T-cell (primary cell): ENCODE measurements at regions of chr14 and their contacts with region 1.

Region 1: DNA sequence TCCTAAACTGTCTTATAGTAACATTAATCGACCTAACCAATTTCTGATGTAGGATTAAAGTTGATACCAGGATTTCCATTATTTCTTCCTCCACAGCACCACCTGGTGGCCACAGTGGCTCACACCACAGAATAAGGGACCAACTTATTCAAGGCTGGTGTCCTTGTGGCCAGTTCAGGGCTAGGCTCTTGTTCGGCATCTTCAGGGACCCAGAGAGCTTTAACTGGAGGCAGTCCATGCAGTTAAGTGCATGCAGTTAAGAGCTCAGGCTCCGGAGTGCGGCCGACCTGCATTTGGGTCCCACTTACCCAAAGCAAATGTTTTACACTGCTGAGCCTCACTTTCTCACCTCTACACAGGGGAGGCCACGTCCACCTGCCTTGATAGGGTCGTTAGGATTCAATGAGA is 42.0 kb upstream of the GPR68 start:
- DNase-seq: peak; percentile 36 to 87 (median 75)
- ATAC-seq: peak; percentile 56 to 78 (median 76)
- H3K4me3 ChIP-seq: no peak overlapping the region
- H3K4me3 Mint-ChIP-seq: no peak overlapping the region
- H3K27ac ChIP-seq: no peak overlapping the region
- H3K27ac Mint-ChIP-seq: peak overlapping the region; percentile 40 to 71
- H3K4me1 ChIP-seq: peaks cover 0 to 9% of the 10 kb centered on the region in 2 experiments
- H3K4me1 Mint-ChIP-seq: peaks cover 12 to 20% (median 14%) of the 10 kb centered on the region in 3 donors
- H3K27me3 ChIP-seq: no peaks in the 10 kb centered on the region
- H3K27me3 Mint-ChIP-seq: no peaks in the 10 kb centered on the region

Region 2: DNA sequence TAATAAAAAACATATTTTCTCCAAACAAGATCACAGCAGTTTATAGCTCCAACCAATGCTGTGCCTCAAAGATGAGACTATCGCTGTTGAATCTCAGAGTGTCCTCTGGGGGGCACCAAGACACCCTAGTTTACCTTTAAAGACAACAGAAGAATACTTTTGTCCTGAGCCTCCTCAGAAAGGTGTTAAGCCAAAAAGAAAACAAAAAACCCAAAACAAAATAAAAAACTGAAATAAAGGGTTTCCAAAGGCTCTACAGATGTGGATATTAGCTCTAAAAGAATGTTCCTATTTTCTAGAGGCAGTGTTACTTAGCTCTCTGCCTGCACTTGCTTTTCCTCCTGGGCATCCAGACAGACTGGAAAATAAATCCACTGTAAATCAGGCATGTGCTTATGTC is 383.4 kb before region 1 on chr14:
- CTCF ChIA-PET with region 1: interaction called in 1 of 2 experiments, 10 read pairs
- POLR2A ChIA-PET with region 1: no interaction called
- DNase-seq: peak; percentile 13 to 77 (median 47)
- ATAC-seq: peak; percentile 64 to 90 (median 81)
- H3K4me3 ChIP-seq: no peak overlapping the region
- H3K4me3 Mint-ChIP-seq: no peak overlapping the region
- H3K27ac ChIP-seq: no peak overlapping the region
- H3K27ac Mint-ChIP-seq: peak overlapping the region in 1 of 2 donors; percentile 48
- H3K4me1 ChIP-seq: no peaks in the 10 kb centered on the region
- H3K4me1 Mint-ChIP-seq: peaks cover 0 to 3% (median 2%) of the 10 kb centered on the region in 3 donors
- H3K27me3 ChIP-seq: no peaks in the 10 kb centered on the region
- H3K27me3 Mint-ChIP-seq: no peaks in the 10 kb centered on the region

Region 3: DNA sequence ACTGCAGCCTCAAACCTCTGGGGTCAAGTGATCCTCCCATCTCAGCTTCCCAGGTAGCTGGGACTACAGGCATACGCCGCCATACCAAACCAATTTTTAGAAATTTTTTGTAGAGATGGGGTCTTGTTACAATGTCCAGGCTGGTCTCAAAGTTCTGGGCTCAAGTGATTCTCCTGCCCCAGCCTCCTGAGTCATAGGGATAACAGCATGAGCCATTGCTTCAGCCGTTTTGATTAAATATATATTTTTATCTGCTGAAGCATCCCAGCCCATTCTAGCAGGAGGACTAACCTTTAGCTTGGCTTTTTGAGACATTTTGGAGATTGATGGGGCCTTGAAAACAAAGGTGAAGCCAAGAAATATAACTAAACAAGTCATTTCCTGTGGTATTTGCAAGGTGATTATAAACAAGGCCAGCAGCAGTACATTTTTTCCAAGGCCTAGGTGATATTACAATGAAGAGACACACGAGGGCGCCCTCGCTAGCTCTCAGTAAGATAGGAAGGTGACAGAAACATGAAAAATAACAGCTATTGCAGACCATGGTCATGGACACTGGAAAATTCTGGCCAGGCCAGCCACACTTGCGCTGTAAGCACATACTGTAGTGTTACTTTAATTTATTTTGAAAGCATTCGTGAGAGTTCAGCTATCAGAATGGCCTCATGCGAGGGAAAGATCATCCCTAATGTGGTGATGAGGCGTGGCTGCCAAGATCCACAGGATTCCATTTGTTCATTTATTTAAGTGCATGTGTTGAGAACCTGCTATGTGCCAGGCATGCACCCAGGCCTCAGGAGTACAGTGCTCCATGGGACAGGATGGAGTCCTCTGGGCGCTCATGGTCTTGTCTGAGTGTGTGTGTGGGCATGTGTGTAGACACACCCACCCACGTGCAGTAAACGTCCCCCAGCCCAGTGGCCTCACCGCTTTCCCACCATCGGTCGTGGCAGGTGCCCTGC is 109.2 kb before region 1 on chr14:
- CTCF ChIA-PET with region 1: interaction called, 10 to 62 read pairs
- POLR2A ChIA-PET with region 1: interaction called in 1 of 2 experiments, 3 read pairs
- DNase-seq: peak; percentile 40 to 89 (median 63)
- ATAC-seq: peak; percentile 77 to 88 (median 87)
- H3K4me3 ChIP-seq: no peak overlapping the region
- H3K4me3 Mint-ChIP-seq: no peak overlapping the region
- H3K27ac ChIP-seq: peak overlapping the region; percentile 67
- H3K27ac Mint-ChIP-seq: peak overlapping the region; percentile 92 to 94
- H3K4me1 ChIP-seq: peaks cover 0 to 11% of the 10 kb centered on the region in 2 experiments
- H3K4me1 Mint-ChIP-seq: peaks cover 12 to 17% (median 13%) of the 10 kb centered on the region in 3 donors
- H3K27me3 ChIP-seq: no peaks in the 10 kb centered on the region
- H3K27me3 Mint-ChIP-seq: no peaks in the 10 kb centered on the region

Region 4: DNA sequence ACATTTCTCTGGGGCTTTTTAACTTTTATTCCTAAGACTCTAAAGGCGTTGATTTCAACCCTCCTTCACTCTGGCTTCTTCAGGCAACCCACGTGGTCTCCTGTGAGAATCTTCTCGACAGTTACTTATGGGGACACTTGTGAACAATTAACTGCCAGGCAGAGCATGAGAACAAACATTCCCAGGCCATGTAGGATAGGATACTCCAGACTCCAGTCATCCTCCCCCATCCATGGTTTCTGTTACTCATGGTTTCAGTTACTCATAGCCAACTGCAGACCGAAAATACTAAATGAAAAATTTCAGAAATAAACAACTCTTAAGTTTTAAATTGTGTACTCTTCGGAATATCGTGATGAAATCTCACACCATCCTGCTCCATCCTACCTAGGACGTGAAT is 61.5 kb before region 1 on chr14:
- CTCF ChIA-PET with region 1: interaction called, 7 to 12 read pairs
- POLR2A ChIA-PET with region 1: no interaction called
- DNase-seq: no peak
- ATAC-seq: no peak
- H3K4me3 ChIP-seq: no peak overlapping the region
- H3K4me3 Mint-ChIP-seq: peak overlapping the region in 1 of 3 donors; percentile 75
- H3K27ac ChIP-seq: peak overlapping the region; percentile 39
- H3K27ac Mint-ChIP-seq: peak overlapping the region; percentile 86 to 95
- H3K4me1 ChIP-seq: peaks cover 30 to 82% of the 10 kb centered on the region in 2 experiments
- H3K4me1 Mint-ChIP-seq: peaks cover 90 to 94% (median 91%) of the 10 kb centered on the region in 3 donors
- H3K27me3 ChIP-seq: no peaks in the 10 kb centered on the region
- H3K27me3 Mint-ChIP-seq: no peaks in the 10 kb centered on the region

Region 5: GRCh38 chr14:91405724-91406435 is 119.3 kb after region 1 on chr14:
- CTCF ChIA-PET with region 1: interaction called in 1 of 2 experiments, 11 read pairs
- POLR2A ChIA-PET with region 1: no interaction called
- DNase-seq: no peak
- ATAC-seq: no peak
- H3K4me3 ChIP-seq: peak overlapping the region; percentile 22 to 35
- H3K4me3 Mint-ChIP-seq: peak overlapping the region; percentile 68 to 81 (median 69)
- H3K27ac ChIP-seq: peak overlapping the region; percentile 95
- H3K27ac Mint-ChIP-seq: peak overlapping the region; percentile 94
- H3K4me1 ChIP-seq: peaks cover 77 to 97% of the 10 kb centered on the region in 2 experiments
- H3K4me1 Mint-ChIP-seq: peaks cover 93 to 95% (median 94%) of the 10 kb centered on the region in 3 donors
- H3K27me3 ChIP-seq: no peaks in the 10 kb centered on the region
- H3K27me3 Mint-ChIP-seq: no peaks in the 10 kb centered on the region